BJ (cell line): ENCODE measurements at regions of chr11 and their contacts with region 1.

Region 1: DNA sequence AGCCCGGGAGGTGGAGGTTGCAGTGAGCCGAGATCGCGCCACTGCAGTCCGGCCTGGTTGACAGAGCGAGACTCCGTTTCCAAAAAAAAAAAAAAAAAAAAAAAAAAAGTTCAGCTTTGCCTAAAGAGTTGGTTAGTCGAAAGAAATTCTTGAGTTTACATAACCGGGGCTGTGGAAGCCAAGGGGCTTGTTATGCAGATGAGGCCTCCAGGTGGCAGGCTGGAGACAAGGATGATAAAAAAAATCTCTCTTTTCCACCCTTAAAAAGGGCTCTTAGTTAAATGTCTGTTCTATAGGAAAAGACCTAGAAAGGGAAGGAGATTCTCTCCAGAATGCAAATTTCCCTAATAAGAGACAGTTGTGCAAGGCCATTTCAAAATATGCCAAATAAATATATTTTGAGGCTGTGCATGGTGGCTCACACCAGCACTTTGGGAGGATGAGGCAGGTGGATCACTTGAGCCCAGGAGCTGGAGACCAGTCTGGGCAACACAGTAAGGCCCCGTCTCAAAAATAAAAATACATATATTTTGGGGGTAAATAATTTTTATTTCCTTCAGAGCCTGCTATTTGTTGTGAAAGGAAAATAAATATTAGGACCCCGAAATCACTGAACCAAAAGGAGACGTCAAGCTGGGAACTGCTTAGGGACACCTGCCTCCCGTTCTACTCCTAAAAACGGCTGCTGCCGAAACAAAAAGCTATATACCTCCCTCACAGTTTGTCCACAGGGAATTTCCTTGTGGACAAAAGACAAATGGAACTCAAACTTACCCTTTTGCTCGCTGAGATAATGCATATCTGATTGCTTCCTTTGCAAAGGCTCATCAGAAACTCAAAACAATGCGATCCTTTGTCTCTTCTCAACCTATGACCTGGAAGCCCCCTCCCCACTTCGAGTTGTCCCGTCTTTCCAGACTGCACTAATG is 2.4 kb upstream of the IFITM2 start:
- DNase-seq: no peak
- H3K4me3 ChIP-seq: no peak overlapping the region
- H3K27me3 ChIP-seq: peaks cover under 1% of the 10 kb centered on the region; the same call in 1 of the 2 replicates
- CTCF ChIP-seq: peak; percentile 80

Region 2: DNA sequence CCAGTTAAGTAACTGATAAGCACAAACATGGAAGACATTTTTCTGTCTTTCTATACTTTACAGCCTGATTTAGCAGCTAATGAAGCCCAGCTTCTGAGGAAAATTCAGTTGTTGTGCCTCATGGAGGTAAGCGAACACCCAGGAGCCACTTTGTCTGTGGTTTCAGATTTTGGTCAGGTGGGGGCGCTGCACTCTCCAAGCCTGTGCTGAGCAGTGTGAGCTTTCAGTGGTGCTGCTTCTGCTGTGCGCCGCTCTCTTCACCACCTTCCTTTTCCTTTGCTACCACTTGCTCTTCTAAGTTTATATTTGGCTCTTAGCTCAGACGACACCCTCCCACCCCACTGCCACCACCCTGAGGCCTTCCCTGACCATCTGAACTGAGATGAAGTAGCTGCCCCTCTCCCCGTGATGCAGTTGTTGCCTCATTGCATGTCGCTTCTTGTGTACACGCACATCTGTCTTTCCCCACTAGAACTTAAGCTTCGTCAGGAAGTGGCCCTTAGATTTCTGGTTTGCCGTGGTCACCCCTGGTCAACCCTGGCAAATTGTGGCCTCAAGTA is 54.4 kb before region 1 on chr11:
- CTCF ChIA-PET with region 1: interaction called, 20 read pairs
- POLR2A ChIA-PET with region 1: no interaction called
- DNase-seq: no peak
- H3K4me3 ChIP-seq: no peak overlapping the region
- H3K27me3 ChIP-seq: no peaks in the 10 kb centered on the region
- CTCF ChIP-seq: peak; percentile 74

Region 3: DNA sequence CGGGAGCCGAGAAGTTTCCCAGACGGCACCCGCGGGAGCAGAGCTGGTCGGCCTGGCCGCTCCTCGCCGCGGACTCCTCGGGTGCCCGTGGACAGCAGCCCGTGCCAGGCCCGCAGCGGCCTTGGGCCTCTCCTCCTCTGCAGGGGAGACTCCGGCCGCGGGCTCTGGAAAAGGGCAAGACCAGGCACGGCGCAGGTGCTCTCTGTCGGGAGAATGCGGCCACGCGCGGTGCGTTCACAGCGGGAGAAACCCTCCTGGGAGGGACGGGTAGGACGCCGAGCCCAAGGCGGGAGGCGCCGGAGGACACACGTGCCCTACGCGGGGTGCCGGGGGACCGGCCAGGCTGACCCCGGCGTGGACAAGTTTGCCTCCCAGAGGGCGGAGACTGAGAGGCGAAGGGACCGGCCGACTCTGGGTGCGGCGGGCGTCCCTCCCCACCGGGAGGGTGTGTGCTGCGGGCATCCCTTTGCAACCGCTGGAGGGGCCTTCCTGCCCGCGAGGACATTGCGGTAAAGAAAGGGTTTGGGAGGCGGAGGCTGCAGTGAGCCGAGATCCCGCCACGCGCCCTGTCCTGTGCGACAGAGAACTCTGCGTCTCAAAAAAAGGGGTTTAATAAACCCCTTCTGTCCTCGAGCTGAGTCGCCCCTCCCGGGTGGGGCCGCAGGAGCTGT is 11.0 kb after region 1 on chr11:
- CTCF ChIA-PET with region 1: interaction called, 12 read pairs
- POLR2A ChIA-PET with region 1: no interaction called
- DNase-seq: no peak
- H3K4me3 ChIP-seq: peak overlapping the region; percentile 47
- H3K27me3 ChIP-seq: no peaks in the 10 kb centered on the region
- CTCF ChIP-seq: no peak

Region 4: GRCh38 chr11:363948-364761 is 59.0 kb after region 1 on chr11:
- CTCF ChIA-PET with region 1: interaction called, 57 read pairs
- POLR2A ChIA-PET with region 1: interaction called, 3 read pairs
- DNase-seq: no peak
- H3K4me3 ChIP-seq: no peak overlapping the region
- H3K27me3 ChIP-seq: peaks cover 25% of the 10 kb centered on the region
- CTCF ChIP-seq: peak; percentile 53

Region 5: GRCh38 chr11:562046-562904 is 257.1 kb after region 1 on chr11:
- CTCF ChIA-PET with region 1: no interaction called
- POLR2A ChIA-PET with region 1: interaction called, 22 read pairs
- DNase-seq: no peak
- H3K4me3 ChIP-seq: peak overlapping the region; percentile 60; the same call in 1 of the 2 replicates
- H3K27me3 ChIP-seq: peaks cover 4% of the 10 kb centered on the region
- CTCF ChIP-seq: no peak

Region 6: GRCh38 chr11:832321-833113 is 527.3 kb after region 1 on chr11 and contains the start of gene CD151:
- CTCF ChIA-PET with region 1: no interaction called
- POLR2A ChIA-PET with region 1: no interaction called
- DNase-seq: no peak
- H3K4me3 ChIP-seq: peak within 1 kb of the TSS; percentile 80
- H3K27me3 ChIP-seq: no peaks in the 10 kb centered on the region
- CTCF ChIP-seq: no peak
- polyA plus RNA-seq, gene CD151: 1,448 and 2,262 TPM in 2 replicates